Activated T-helper 1 cell treated with anti-CD3 and anti-CD28 coated beads, Interleukin-12 subunit alpha, Interleukin-12 subunit beta, Interleukin-2, Interleukin-4 antibody, amounts not matched to agents 30 ng/mL and 10 ng/mL and 1 ng/mL, durations not matched to agents 14 hours and 24 hours and 36 hours (primary cell): ENCODE measurements at regions of chr10 and their contacts with region 1.

Region 1: DNA sequence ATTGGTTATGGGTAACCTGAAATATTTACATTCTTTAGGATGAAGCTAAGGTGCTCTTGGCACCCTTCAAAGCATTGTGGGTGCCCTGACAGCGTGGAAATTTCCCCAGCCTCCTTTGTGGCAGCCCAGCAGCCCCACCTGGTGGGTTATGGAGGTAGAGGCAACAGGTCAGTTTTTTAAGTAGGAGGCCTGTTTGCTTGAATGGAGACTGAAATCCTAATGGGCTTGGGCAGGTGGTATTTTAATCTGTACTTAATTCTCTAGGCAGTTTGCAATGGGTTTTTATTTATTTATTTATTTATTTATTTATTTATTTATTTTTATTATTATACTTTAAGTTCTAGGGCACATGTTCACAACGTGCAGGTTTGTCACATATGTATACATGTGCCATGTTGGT is 139.4 kb downstream of the EPC1 start:
- DNase-seq: peak; percentile 45
- H3K4me3 Mint-ChIP-seq: no peak overlapping the region
- H3K27ac Mint-ChIP-seq: no peak overlapping the region
- H3K4me1 Mint-ChIP-seq: peaks cover 5% of the 10 kb centered on the region
- H3K27me3 Mint-ChIP-seq: no peaks in the 10 kb centered on the region

Region 2: GRCh38 chr10:32190890-32191491 is 16.6 kb before region 1 on chr10:
- intact Hi-C with region 1: loop called (anchors 1 kb)
- DNase-seq: no peak
- H3K4me3 Mint-ChIP-seq: no peak overlapping the region
- H3K27ac Mint-ChIP-seq: no peak overlapping the region
- H3K4me1 Mint-ChIP-seq: peaks cover 7% of the 10 kb centered on the region
- H3K27me3 Mint-ChIP-seq: no peaks in the 10 kb centered on the region